ENCODE measurements at regions of chr17 and their contacts with region 1.

Region 1: DNA sequence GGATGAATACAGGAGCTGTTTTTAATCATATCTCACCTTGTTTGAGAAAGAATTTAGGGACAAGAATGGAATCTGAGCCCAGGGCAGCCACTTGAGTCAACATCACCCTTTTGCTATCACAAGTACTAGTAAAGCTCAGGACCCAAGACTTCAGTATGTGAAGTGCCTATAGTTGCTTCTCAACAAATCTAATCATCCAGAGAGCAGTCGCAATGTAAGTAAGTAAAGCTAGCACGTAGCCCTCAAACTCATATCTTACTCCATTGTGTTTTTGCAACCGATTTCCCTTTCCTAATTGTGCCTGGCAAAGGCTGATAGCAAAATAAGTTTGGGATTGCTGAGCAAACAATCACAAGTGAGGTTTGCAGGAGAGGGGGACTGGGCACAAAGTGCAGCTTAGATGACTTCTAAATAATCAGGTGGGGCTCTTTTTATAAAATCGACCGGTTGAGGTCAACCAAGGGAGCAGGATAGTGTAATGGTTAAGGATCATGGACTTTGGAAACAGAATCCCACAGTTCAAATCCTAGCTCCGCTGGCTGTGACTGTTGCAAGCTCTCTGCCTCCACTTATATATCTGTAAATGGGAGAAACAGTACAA is 13.0 kb downstream of the TOB1 start:
- DNase-seq: no peak
- ATAC-seq: no peak
- H3K4me3 ChIP-seq: no peak overlapping the region
- H3K4me3 Mint-ChIP-seq: peak overlapping the region; percentile 81
- H3K27ac ChIP-seq: no peak overlapping the region
- H3K27ac Mint-ChIP-seq: peak overlapping the region; percentile 81
- H3K4me1 ChIP-seq: peaks cover 12% of the 10 kb centered on the region
- H3K4me1 Mint-ChIP-seq: peaks cover 29% of the 10 kb centered on the region
- H3K27me3 ChIP-seq: no peaks in the 10 kb centered on the region
- H3K27me3 Mint-ChIP-seq: no peaks in the 10 kb centered on the region
- CTCF ChIP-seq: no peak

Region 2: DNA sequence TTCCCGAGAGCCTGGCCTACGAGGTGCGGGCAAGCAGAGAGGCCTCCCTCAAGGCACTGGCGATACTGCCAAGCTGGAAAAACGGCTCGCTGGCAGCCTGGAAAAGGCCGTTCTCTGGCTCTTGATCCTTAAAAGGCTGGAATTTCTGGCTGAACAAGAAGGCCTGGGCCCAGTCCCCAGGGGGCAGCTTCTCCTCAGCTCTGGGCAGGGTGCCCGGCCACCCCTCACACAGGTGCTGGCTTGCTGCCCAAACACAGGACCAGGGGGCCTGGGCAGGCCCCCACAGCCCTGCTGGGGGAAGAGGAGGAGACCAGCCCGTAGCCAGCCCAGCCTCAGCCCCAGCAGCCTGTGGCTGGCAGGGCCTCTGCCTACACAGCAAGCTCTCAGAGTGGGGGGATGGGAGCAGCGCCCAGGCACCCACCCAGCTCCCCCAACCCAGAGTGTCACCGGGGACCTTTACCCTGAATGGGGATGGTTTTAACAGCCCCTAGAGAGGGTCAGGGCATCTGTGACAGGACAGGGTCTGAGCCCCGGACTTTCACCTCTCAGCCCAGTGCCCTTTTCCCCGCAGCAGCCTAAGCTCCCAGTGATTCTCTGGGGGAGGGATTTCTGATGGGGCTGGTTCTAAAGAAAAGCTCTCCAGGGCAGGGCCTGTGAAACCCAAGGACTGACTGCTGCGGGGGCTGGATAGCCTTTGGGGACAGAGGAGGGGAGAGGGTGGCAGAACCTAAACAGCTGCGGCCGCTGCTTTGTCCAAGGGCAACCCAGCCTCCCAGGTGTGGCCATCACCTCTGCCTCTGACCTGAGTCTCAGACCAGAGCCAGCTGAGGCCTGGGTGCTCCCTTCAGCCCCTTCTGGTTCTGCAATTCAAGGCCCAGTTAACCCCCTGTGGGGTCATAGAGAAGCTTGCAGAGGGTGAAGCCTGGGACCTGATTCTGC is 51.7 kb after region 1 on chr17:
- CTCF ChIA-PET with region 1: interaction called, 18 read pairs
- POLR2A ChIA-PET with region 1: interaction called, 3 read pairs
- intact Hi-C with region 1: loop called in 1 of 2 experiments (anchors 1 kb)
- DNase-seq: no peak
- ATAC-seq: no peak
- H3K4me3 ChIP-seq: no peak overlapping the region
- H3K4me3 Mint-ChIP-seq: no peak overlapping the region
- H3K27ac ChIP-seq: peak overlapping the region in 1 of 2 donors; percentile 80
- H3K27ac Mint-ChIP-seq: peak overlapping the region; percentile 86
- H3K4me1 ChIP-seq: peaks cover 84% of the 10 kb centered on the region
- H3K4me1 Mint-ChIP-seq: peaks cover 66% of the 10 kb centered on the region
- H3K27me3 ChIP-seq: no peaks in the 10 kb centered on the region
- H3K27me3 Mint-ChIP-seq: no peaks in the 10 kb centered on the region
- CTCF ChIP-seq: no peak

Region 3: DNA sequence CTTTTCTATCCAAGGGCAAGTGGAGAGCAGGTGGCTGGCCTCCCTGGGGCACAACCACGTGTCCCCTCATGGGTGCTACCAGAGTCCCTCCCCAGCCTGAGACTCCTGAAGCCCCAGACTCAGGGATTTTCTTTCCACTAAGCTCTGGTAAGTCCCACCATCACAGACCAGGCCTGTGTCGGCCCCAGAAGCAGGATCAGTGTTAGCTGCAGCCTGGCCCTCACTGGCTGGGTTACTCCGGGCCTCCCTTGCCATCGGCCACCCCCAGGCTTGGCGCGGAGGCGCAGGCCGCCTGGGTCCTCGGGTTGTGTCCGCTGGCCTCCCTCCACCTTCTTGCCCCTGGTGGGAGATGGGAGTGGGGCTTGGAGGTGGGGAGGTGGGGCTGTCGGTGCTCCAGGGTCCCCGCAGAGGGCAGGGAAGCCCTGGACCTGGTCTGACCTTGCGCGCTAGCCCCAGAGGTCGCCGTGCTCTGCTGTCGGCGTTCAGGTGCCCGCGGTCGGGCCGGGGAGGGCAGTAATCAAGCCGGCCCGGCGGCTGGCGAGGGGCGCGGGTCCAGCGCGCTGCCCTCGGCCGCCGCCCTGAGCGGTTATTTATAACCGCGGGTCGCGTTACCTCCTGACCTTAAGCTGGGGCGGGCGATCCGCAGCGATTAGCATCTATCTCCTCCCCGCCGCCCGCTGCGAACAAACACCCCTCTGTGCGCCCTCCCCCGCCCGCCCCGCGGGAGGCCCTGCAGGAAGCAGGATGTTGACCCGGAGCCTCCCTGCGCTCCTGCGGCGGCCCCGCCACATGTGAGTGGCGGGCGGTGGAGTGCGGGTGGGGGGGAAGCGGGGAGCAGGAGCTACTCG is 91.2 kb after region 1 on chr17:
- CTCF ChIA-PET with region 1: interaction called, 22 read pairs
- POLR2A ChIA-PET with region 1: interaction called, 22 read pairs
- intact Hi-C with region 1: no loop called
- DNase-seq: peak; percentile 55 to 88 (median 80)
- ATAC-seq: peak; percentile 89
- H3K4me3 ChIP-seq: peak overlapping the region; percentile 65
- H3K4me3 Mint-ChIP-seq: peak overlapping the region; percentile 83
- H3K27ac ChIP-seq: peak overlapping the region; percentile 68 to 77
- H3K27ac Mint-ChIP-seq: peak overlapping the region; percentile 85
- H3K4me1 ChIP-seq: peaks cover 61% of the 10 kb centered on the region
- H3K4me1 Mint-ChIP-seq: peaks cover 52% of the 10 kb centered on the region
- H3K27me3 ChIP-seq: no peaks in the 10 kb centered on the region
- H3K27me3 Mint-ChIP-seq: no peaks in the 10 kb centered on the region
- CTCF ChIP-seq: no peak

Region 4: DNA sequence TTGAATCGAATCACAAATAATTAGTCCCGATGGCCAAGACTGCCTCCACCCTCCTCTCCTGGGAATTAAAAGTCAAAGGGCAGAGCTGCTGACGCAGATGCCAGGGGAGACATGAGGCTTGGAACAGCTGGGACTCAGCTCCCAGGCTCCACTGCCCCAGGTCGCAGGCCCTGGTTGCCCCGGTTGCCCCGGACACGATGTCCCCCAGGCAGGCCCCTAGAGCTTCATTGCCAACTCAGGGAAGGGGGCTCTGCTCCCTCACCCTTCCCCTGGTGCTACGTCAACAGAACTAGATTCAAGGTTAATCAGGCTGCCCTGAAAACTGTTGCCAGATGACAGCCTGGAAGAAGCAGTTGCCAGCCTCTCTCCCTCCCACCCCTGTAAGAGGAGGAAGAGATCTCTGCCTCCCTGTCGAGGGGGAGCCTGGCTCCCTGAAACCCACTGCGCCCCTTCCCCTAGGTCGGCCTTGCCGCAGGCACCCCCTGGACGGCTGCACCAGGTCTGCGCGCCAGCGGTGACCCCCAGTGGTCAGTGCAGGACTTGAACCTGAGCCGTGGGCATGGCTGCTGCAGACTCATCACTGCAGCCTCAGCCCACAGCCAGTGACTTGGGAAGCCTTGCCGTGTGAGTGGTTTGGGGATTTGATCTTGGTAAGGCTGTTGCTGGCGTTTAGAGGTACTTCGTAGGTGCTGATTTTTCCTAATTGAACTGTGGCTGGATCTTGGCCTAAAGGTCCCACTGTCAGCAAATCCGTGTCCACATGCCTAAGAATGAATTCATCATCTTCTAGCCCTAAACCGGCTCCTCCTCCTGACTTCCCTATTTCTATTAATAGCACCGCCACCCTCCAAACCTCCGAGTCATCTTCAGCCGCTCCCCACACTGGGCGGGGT is 97.1 kb after region 1 on chr17:
- CTCF ChIA-PET with region 1: interaction called, 63 read pairs
- POLR2A ChIA-PET with region 1: interaction called, 22 read pairs
- intact Hi-C with region 1: loop called in 1 of 2 experiments (anchors 1 kb)
- DNase-seq: peak; percentile 32 to 80 (median 54)
- ATAC-seq: peak; percentile 84
- H3K4me3 ChIP-seq: no peak overlapping the region
- H3K4me3 Mint-ChIP-seq: no peak overlapping the region
- H3K27ac ChIP-seq: no peak overlapping the region
- H3K27ac Mint-ChIP-seq: peak overlapping the region; percentile 42
- H3K4me1 ChIP-seq: peaks cover 33% of the 10 kb centered on the region
- H3K4me1 Mint-ChIP-seq: peaks cover 34% of the 10 kb centered on the region
- H3K27me3 ChIP-seq: no peaks in the 10 kb centered on the region
- H3K27me3 Mint-ChIP-seq: no peaks in the 10 kb centered on the region
- CTCF ChIP-seq: peak; percentile 68

Region 5: DNA sequence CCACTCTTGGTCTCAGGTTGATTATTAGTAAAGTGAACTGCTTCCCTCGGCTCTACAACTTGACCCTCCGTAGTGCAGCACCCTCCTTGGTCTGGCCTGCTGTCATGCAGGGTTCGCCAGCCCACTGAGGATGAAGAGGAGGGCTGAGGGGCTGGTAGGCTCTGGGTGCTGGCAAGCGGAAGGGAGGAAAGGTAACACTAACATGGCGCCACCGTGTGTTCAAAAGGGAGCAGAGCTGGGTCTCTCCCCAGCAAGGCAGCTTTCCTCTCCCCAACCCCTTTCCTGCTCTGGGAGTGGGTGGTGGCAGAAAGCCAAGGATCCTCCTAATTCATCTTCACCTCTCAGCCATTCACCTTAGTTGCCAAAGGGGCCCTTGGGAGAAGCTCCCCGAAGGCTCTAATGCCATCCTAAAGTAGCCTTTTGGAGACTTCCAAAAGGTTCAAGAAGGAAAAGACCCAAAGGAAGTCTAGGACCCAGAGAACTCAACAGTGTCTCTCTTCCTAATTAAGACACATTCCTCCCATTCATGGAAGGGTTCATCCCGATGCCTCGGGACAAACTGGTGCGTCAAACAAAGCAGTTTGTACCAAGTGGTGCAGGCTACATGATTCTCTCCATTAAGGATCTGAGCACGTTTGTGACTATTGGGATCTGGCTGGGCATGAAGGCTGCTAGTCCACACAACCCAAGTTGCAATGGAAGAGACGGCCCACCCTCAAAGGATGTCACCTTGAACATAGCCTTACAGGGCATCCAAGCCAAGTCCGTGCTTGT is 103.8 kb after region 1 on chr17:
- CTCF ChIA-PET with region 1: interaction called, 63 read pairs
- POLR2A ChIA-PET with region 1: interaction called, 23 read pairs
- intact Hi-C with region 1: loop called (anchors 1 kb)
- DNase-seq: peak; percentile 52 to 84 (median 62)
- ATAC-seq: peak; percentile 98
- H3K4me3 ChIP-seq: no peak overlapping the region
- H3K4me3 Mint-ChIP-seq: no peak overlapping the region
- H3K27ac ChIP-seq: no peak overlapping the region
- H3K27ac Mint-ChIP-seq: peak overlapping the region; percentile 28
- H3K4me1 ChIP-seq: peaks cover 9% of the 10 kb centered on the region
- H3K4me1 Mint-ChIP-seq: peaks cover 8% of the 10 kb centered on the region
- H3K27me3 ChIP-seq: no peaks in the 10 kb centered on the region
- H3K27me3 Mint-ChIP-seq: no peaks in the 10 kb centered on the region
- CTCF ChIP-seq: peak; percentile 86

Region 6: GRCh38 chr17:51120739-51121617 is 267.9 kb after region 1 on chr17 and contains the start of gene SPAG9:
- CTCF ChIA-PET with region 1: no interaction called
- POLR2A ChIA-PET with region 1: no interaction called
- intact Hi-C with region 1: loop called in 1 of 2 experiments (anchors 5 kb)
- DNase-seq: peak; percentile 77 to 98 (median 86)
- ATAC-seq: peak; percentile 82
- H3K4me3 ChIP-seq: peak within 1 kb of the TSS; percentile 96
- H3K4me3 Mint-ChIP-seq: peak within 1 kb of the TSS; percentile 97
- H3K27ac ChIP-seq: peak within 1 kb of the TSS; percentile 92
- H3K27ac Mint-ChIP-seq: peak within 1 kb of the TSS; percentile 94
- H3K4me1 ChIP-seq: peaks cover 43% of the 10 kb centered on the region
- H3K4me1 Mint-ChIP-seq: peaks cover 54% of the 10 kb centered on the region
- H3K27me3 ChIP-seq: no peaks in the 10 kb centered on the region
- H3K27me3 Mint-ChIP-seq: no peaks in the 10 kb centered on the region
- CTCF ChIP-seq: no peak
- total RNA-seq, gene SPAG9: 60.2 to 64.6 TPM